Cardiac septum (tissue), 1 donor: ENCODE measurements at regions of chr15 and their contacts with region 1.

Region 1: DNA sequence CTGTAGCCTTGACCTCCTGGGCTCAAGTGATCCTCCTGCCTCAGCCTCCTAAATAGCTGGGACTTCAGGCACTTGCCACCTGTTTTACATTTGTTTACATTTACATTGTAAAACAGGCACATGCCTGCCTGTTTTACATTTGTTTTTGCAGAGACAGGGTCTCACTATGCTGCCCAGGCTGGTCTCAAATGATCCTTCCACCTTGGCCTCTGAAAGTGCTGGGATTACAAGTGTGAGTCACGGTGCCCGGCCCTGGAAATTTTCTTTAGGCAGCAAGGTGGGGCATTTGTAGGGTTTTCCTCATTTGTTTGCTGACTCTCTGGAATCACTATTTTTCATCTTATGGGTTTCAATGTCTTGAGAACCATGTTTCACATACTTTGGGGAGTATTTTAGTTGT is 25.0 kb downstream of the PIF1 start:
- DNase-seq: no peak

Region 2: DNA sequence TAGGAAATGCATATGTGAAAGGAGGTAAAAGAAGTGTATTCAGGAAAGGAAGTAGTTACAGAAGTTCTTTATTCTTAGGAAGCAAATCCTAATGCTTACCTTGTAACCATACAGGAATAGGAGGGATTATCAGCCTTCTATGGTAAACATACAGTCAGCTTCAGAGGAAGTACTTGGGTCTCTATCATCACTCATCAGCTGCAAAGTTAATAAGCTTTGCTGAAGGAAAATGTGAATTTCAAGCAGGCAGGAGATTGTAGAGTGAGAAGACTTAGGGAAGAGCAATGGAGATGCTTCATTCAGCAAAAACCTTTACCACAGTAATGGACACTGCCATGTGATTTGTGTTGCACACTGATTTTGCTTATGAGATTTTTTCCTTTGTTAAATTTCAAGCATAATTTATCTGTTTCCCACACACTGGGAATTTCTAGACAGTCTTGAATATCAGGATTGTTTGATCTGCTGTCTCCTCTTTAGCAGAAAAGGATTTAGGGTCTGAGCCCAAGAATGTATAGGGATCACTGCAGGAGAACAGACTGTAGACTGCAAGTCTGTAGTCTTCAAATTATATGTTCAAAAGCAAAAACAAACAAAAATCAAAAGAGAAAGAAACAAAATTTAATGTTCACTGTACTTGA is 189.3 kb before region 1 on chr15:
- intact Hi-C with region 1: no loop called
- DNase-seq: no peak

Region 3: DNA sequence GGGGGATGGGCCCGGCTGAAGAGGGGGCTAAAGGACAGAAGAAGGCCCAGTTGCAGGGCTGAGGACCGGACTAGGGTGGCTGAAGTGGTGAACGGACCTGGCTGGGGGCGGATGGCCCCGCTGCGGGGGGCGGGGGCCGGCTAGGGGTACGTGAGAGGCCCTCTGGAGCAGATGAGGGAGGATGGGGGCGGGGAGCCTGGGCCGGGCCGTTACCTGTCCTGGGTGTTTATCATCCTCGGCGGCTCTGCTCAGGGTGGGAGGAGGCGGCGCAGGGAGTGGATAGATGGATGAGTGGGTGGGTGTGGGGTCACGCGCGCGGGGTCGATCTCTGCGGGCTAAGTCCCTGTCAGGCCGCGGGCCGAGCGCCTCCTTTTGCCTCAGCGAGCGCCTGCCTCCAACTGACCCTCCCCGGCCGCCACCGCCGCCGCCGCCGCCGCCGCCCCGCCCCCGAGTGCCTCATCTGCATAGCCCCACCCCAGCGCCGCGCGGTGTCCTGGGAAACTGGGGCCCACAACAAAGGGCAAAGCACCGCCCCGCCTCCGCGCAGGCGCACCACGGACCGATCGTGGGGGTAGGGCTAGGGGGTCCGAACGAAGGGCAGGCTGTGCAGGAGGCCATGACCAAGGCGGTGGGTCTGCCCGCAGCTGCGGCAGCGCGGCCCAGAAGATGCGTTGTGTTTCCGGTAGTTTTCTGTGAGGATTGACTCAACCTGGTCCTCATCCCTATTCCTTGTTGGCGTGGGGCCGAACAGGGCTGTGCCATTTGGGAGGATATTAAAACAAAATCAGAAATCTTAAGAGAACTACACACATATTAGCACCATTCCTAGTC is 97.4 kb before region 1 on chr15:
- intact Hi-C with region 1: no loop called
- DNase-seq: peak; percentile 99

Region 4: GRCh38 chr15:64749999-64750657 is 50.3 kb before region 1 on chr15:
- intact Hi-C with region 1: loop called (anchors 2 kb)
- DNase-seq: no peak

Region 5: DNA sequence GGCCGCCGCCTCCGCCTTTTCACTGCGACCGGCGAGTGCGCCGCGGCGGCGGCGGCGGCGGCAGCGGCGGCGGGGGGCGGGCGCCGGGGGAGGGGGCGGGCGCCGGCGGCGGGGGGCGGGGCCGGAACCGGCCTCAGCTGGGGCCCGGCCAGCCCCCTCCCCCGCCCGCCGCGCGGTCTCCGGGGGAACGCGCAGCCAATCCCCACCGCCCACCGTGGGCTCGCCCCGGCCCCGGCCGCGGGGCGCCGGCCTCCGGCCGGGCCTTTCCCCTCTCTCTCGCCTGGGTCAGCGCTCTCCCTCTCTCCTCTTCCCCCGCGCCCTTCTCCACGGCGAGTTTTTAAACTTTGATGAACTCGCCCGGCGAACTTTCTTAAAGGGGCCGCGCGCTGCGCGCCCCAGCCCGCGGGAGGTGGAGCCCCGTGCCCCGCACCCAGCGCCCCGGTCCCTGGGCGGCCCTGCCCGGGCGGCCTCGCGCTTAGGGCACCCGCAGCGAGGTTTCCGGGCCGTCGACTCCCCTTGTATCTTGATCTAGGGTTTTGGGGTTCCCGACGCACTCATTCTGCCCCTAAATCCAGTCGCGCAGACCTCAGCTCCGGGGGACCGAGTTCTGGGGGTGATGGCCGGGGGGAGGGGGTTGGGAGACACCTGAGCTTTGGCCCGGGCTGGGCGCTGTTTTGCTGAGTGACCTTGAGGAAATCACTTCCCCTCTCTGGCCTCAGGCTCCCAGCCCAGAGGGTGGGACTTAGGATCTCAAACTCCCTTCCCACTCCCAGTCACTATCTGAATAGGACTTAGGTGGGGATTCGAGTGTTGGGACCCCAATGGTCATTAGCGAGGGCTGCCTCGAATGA is 24.7 kb before region 1 on chr15 and contains the start of gene RBPMS2:
- intact Hi-C with region 1: loop called (anchors 2 kb)
- DNase-seq: no peak
- total RNA-seq, gene RBPMS2: 242 TPM